B cell (primary cell): ENCODE measurements at regions of chr6 and their contacts with region 1.

Region 1: GRCh38 chr6:26196846-26197648 is 109.8 kb downstream of the HFE start:
- DNase-seq: peak; percentile 95
- ATAC-seq: peak; percentile 55
- H3K4me3 ChIP-seq: peak overlapping the region; percentile 78 to 100 (median 90)
- H3K4me3 Mint-ChIP-seq: peak overlapping the region; percentile 91
- H3K27ac ChIP-seq: peak overlapping the region; percentile 78 to 95
- H3K27ac Mint-ChIP-seq: peak overlapping the region; percentile 96
- H3K4me1 ChIP-seq: peaks cover 16 to 31% of the 10 kb centered on the region in 2 donors
- H3K4me1 Mint-ChIP-seq: peaks cover 41% of the 10 kb centered on the region
- H3K27me3 ChIP-seq: no peaks in the 10 kb centered on the region
- H3K27me3 Mint-ChIP-seq: no peaks in the 10 kb centered on the region
- CTCF ChIP-seq: no peak

Region 2: GRCh38 chr6:25913741-25914140 is 283.3 kb before region 1 on chr6:
- CTCF ChIA-PET with region 1: no interaction called
- POLR2A ChIA-PET with region 1: no interaction called
- intact Hi-C with region 1: no loop called
- DNase-seq: no peak
- ATAC-seq: no peak
- H3K4me3 ChIP-seq: no peak overlapping the region
- H3K4me3 Mint-ChIP-seq: no peak overlapping the region
- H3K27ac ChIP-seq: no peak overlapping the region
- H3K27ac Mint-ChIP-seq: no peak overlapping the region
- H3K4me1 ChIP-seq: no peaks in the 10 kb centered on the region
- H3K4me1 Mint-ChIP-seq: peaks cover 4% of the 10 kb centered on the region
- H3K27me3 ChIP-seq: no peaks in the 10 kb centered on the region
- H3K27me3 Mint-ChIP-seq: peaks cover 10% of the 10 kb centered on the region
- CTCF ChIP-seq: no peak

Region 3: GRCh38 chr6:26045065-26045927 is 151.8 kb before region 1 on chr6:
- CTCF ChIA-PET with region 1: interaction called, 8 read pairs
- POLR2A ChIA-PET with region 1: interaction called, 38 read pairs
- intact Hi-C with region 1: loop called (anchors 5 kb)
- DNase-seq: peak; percentile 90
- ATAC-seq: peak; percentile 58
- H3K4me3 ChIP-seq: peak overlapping the region; percentile 56 to 98 (median 69)
- H3K4me3 Mint-ChIP-seq: peak overlapping the region; percentile 87
- H3K27ac ChIP-seq: peak overlapping the region; percentile 85 to 89
- H3K27ac Mint-ChIP-seq: peak overlapping the region; percentile 99
- H3K4me1 ChIP-seq: peaks cover 14 to 29% of the 10 kb centered on the region in 2 donors
- H3K4me1 Mint-ChIP-seq: peaks cover 17% of the 10 kb centered on the region
- H3K27me3 ChIP-seq: no peaks in the 10 kb centered on the region
- H3K27me3 Mint-ChIP-seq: no peaks in the 10 kb centered on the region
- CTCF ChIP-seq: no peak

Region 4: DNA sequence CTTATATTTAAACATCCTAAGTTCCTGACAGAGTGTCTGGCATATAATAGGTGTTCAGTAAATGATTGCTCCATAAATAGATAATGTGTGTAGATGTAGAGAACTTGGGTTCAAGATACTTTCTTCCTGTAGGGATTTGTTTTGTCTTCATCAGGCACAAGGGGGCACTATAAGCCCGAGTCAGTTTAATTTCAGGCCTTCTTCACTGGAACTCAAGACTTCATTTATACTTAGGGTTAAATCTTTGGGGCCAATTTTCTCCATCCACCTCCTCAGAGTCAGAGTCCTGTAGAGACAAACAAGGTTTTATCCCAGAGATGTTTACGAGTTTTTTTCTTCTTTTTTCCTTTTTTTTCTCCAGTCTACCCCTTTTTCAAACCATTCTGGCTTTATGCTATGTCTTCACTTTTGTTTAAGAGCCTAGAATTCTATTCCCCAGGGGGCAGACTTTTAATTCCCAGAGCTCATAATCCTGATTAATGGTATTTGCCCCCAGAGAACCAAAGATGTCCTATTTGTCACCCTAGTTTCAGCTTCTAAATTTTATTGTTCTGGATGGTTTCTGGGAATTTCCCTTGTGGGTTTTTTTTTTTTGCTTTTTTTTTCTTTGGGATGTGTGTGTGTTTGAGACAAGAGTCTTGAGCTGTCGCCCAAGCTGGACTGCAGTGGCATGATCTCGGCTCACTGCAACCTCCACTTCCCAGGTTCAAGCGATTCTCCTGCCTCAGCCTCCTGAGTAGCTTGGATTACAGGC is 21.4 kb before region 1 on chr6:
- CTCF ChIA-PET with region 1: interaction called, 8 read pairs
- POLR2A ChIA-PET with region 1: interaction called, 89 read pairs
- intact Hi-C with region 1: loop called (anchors 1 kb)
- DNase-seq: peak; percentile 81
- ATAC-seq: no peak
- H3K4me3 ChIP-seq: no peak overlapping the region
- H3K4me3 Mint-ChIP-seq: peak overlapping the region; percentile 21
- H3K27ac ChIP-seq: no peak overlapping the region
- H3K27ac Mint-ChIP-seq: peak overlapping the region; percentile 85
- H3K4me1 ChIP-seq: peaks cover 21 to 26% of the 10 kb centered on the region in 2 donors
- H3K4me1 Mint-ChIP-seq: peaks cover 29% of the 10 kb centered on the region
- H3K27me3 ChIP-seq: no peaks in the 10 kb centered on the region
- H3K27me3 Mint-ChIP-seq: no peaks in the 10 kb centered on the region
- CTCF ChIP-seq: peak; percentile 93

Region 5: GRCh38 chr6:26234421-26235296 is 37.6 kb after region 1 on chr6:
- CTCF ChIA-PET with region 1: interaction called, 9 read pairs
- POLR2A ChIA-PET with region 1: interaction called, 129 read pairs
- intact Hi-C with region 1: loop called (anchors 1 kb)
- DNase-seq: peak; percentile 87
- ATAC-seq: peak; percentile 76
- H3K4me3 ChIP-seq: peak overlapping the region; percentile 70 to 99 (median 85)
- H3K4me3 Mint-ChIP-seq: peak overlapping the region; percentile 93
- H3K27ac ChIP-seq: peak overlapping the region; percentile 86 to 90
- H3K27ac Mint-ChIP-seq: peak overlapping the region; percentile 95
- H3K4me1 ChIP-seq: peaks cover 13 to 21% of the 10 kb centered on the region in 2 donors
- H3K4me1 Mint-ChIP-seq: peaks cover 23% of the 10 kb centered on the region
- H3K27me3 ChIP-seq: no peaks in the 10 kb centered on the region
- H3K27me3 Mint-ChIP-seq: no peaks in the 10 kb centered on the region
- CTCF ChIP-seq: no peak

Region 6: GRCh38 chr6:26312501-26313390 is 115.7 kb after region 1 on chr6:
- CTCF ChIA-PET with region 1: no interaction called
- POLR2A ChIA-PET with region 1: interaction called, 11 read pairs
- intact Hi-C with region 1: no loop called
- DNase-seq: peak; percentile 90
- ATAC-seq: peak; percentile 75
- H3K4me3 ChIP-seq: peak overlapping the region; percentile 64 to 100 (median 77)
- H3K4me3 Mint-ChIP-seq: peak overlapping the region; percentile 93
- H3K27ac ChIP-seq: peak overlapping the region in 1 of 2 donors; percentile 56
- H3K27ac Mint-ChIP-seq: peak overlapping the region; percentile 92
- H3K4me1 ChIP-seq: peaks cover 15 to 23% of the 10 kb centered on the region in 2 donors
- H3K4me1 Mint-ChIP-seq: peaks cover 32% of the 10 kb centered on the region
- H3K27me3 ChIP-seq: no peaks in the 10 kb centered on the region
- H3K27me3 Mint-ChIP-seq: peaks cover 4% of the 10 kb centered on the region
- CTCF ChIP-seq: no peak

Region 7: DNA sequence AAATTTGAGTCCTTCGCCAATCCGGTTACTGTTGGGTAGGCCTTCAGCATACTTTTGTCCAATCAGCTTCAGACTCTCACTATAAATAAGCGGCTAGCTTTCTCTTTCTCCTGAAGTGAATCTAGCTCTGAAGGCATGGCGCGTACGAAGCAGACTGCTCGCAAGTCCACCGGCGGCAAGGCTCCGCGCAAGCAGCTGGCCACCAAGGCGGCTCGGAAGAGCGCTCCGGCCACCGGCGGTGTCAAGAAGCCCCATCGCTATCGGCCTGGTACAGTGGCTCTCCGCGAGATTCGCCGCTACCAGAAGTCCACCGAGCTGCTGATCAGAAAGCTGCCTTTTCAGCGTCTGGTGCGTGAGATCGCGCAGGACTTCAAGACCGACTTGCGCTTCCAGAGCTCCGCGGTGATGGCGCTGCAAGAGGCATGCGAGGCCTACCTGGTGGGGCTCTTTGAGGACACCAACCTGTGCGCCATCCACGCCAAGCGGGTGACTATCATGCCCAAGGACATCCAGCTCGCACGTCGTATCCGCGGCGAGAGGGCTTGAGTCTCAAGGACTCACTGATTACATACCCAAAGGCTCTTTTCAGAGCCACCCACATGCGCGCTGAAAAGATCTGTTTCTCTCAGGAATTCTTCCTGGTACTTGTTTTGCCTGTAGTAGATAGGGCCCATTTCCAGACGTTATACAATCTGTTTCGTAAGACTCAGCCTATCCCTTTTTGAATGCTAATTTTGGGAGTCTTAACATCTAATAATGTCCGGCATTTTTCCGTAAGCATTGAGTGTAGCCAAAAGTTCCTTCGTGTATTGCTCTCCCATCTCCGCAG is 1613.1 kb after region 1 on chr6:
- CTCF ChIA-PET with region 1: no interaction called
- POLR2A ChIA-PET with region 1: interaction called, 12 read pairs
- intact Hi-C with region 1: loop called (anchors 5 kb)
- DNase-seq: peak; percentile 96
- ATAC-seq: peak; percentile 50
- H3K4me3 ChIP-seq: peak overlapping the region; percentile 66 to 94 (median 84)
- H3K4me3 Mint-ChIP-seq: peak overlapping the region; percentile 98
- H3K27ac ChIP-seq: peak overlapping the region; percentile 82
- H3K27ac Mint-ChIP-seq: peak overlapping the region; percentile 99
- H3K4me1 ChIP-seq: peaks cover 37 to 47% of the 10 kb centered on the region in 2 donors
- H3K4me1 Mint-ChIP-seq: peaks cover 58% of the 10 kb centered on the region
- H3K27me3 ChIP-seq: no peaks in the 10 kb centered on the region
- H3K27me3 Mint-ChIP-seq: no peaks in the 10 kb centered on the region
- CTCF ChIP-seq: no peak